ENCODE measurements at regions of chr9 and their contacts with region 1.

Region 1: DNA sequence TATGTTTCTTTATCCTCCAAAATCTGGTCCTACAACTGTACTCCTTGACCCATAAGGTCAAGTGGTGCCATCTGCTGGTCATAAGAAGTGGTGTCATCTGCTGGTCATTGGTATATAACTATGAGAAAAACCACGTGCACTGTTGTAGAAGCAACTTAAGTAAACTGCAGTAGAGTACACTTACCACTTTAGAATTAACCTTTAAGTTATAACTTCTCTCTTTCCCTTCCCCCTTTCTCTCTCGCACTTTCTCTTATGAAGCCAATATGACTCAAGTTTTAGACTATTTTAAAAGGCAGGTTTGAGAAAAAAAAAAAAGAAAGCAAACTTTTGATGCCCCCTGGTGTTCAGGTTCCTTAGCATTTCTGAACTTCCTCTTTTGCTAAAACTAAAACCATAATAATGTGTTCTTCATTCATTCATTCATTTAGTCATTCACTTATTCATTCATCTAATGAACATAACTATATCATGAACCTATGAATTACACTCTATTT is 12.8 kb upstream of the MTAP start:
- DNase-seq: peak; percentile 69
- ATAC-seq: peak; percentile 96
- H3K4me3 Mint-ChIP-seq: peak overlapping the region; percentile 70
- H3K27ac Mint-ChIP-seq: peak overlapping the region; percentile 83
- H3K4me1 Mint-ChIP-seq: peaks cover 3% of the 10 kb centered on the region
- H3K27me3 Mint-ChIP-seq: peaks cover 9% of the 10 kb centered on the region
- CTCF ChIP-seq: peak; percentile 95

Region 2: DNA sequence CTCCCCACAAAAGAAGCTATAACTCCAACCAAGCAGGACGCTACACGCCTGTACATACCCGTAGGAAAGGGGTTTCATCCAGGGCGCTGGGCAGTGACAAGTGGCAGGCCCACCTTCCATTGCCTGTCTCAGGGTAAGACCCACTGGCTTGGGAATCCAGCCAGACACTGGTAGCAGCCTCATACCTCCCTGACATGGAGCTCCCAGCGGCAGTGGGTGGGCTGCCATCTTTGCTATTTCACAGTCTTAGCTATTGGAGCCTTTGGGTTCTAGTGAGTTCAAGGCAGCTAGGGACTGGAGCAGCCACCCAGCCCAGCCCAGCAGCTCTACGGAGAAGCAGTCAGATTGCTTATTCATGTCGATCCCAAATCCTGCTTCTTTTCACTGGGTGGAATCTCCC is 579.3 kb before region 1 on chr9:
- CTCF ChIA-PET with region 1: interaction called, 3 read pairs
- POLR2A ChIA-PET with region 1: no interaction called
- intact Hi-C with region 1: loop called (anchors 10 kb)
- DNase-seq: no peak
- ATAC-seq: no peak
- H3K4me3 Mint-ChIP-seq: no peak overlapping the region
- H3K27ac Mint-ChIP-seq: no peak overlapping the region
- H3K4me1 Mint-ChIP-seq: peaks cover 6% of the 10 kb centered on the region
- H3K27me3 Mint-ChIP-seq: peaks cover 3% of the 10 kb centered on the region
- CTCF ChIP-seq: no peak

Region 3: GRCh38 chr9:21317956-21318923 is 471.3 kb before region 1 on chr9:
- CTCF ChIA-PET with region 1: no interaction called
- POLR2A ChIA-PET with region 1: no interaction called
- intact Hi-C with region 1: loop called (anchors 5 kb)
- DNase-seq: peak; percentile 61
- ATAC-seq: peak; percentile 76
- H3K4me3 Mint-ChIP-seq: no peak overlapping the region
- H3K27ac Mint-ChIP-seq: no peak overlapping the region
- H3K4me1 Mint-ChIP-seq: peaks cover 14% of the 10 kb centered on the region
- H3K27me3 Mint-ChIP-seq: no peaks in the 10 kb centered on the region
- CTCF ChIP-seq: peak; percentile 75

Region 4: DNA sequence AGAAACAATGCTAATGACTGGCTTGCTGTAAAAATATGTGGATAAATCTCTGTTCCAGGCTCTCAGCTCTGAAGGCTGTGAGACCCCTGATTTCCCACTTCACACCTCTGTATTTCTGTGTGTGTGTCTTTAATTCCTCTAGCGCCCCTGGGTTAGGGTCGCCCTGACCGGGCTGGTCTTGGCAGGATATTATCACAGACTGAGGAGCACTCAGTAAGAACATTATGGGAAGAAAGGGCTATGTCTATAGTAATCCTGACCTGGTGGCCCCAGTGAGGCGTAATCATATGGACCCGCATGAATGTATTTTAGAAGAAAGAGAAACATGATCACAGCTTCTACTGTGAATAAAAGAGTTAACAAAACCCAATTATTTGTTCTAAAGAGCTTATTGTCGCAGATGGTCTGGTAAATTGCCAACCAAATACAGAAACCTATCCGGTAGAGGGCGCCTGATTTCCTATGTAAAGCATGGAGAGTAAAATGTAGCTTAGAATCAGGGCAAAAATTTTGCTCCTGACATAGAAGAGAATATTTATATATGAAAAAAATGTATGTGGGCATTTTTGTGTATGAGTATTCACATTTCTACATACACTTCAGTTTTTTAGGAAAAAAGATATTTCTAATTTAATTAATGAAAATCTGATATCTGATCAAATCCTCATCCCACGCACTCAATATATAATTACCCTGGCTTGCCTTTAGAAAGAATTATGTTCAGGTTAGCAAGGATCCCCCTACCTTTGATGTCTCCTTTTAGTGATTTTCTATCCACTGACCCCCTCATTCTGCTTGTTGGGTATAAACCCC is 355.2 kb before region 1 on chr9:
- CTCF ChIA-PET with region 1: interaction called, 8 read pairs
- POLR2A ChIA-PET with region 1: no interaction called
- intact Hi-C with region 1: loop called (anchors 10 kb)
- DNase-seq: peak; percentile 76
- ATAC-seq: no peak
- H3K4me3 Mint-ChIP-seq: no peak overlapping the region
- H3K27ac Mint-ChIP-seq: no peak overlapping the region
- H3K4me1 Mint-ChIP-seq: no peaks in the 10 kb centered on the region
- H3K27me3 Mint-ChIP-seq: peaks cover 15% of the 10 kb centered on the region
- CTCF ChIP-seq: peak; percentile 40

Region 5: DNA sequence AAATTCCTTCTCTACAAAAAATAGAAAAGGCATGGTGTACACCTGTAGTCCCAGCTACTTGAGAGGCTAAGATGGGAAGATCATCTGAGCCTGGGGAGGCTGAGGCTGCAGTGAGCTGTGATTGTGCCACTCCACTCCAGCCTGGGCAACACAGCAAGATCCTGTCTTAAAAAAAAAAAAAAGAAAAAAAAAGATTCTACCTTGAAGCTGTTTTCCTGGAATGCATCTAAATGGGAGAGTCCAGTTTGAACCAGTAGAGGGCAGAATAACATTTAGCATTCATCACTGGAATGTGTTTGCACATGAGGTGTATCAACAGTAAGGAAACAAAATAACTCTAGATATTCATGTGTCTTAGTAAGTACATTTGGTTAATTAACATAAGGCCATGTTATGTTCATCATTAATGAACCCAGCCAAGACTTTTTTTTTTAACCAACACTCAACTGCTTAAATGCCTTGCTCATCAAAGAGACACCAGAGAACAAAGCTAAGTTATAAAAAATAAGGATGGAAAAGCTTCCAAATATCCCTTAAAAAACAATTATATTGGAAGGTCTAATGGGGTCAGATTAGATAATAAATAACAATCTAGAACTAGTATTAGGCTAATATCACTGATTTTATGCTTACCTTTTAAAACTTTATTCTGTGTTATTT is 323.6 kb before region 1 on chr9:
- CTCF ChIA-PET with region 1: interaction called, 19 read pairs
- POLR2A ChIA-PET with region 1: interaction called, 3 read pairs
- intact Hi-C with region 1: loop called (anchors 2 kb)
- DNase-seq: no peak
- ATAC-seq: peak; percentile 77
- H3K4me3 Mint-ChIP-seq: no peak overlapping the region
- H3K27ac Mint-ChIP-seq: no peak overlapping the region
- H3K4me1 Mint-ChIP-seq: no peaks in the 10 kb centered on the region
- H3K27me3 Mint-ChIP-seq: no peaks in the 10 kb centered on the region
- CTCF ChIP-seq: peak; percentile 73